Activated naive CD4-positive, alpha-beta T cell treated with anti-CD3 and anti-CD28 coated beads for 36 hours (primary cell): ENCODE measurements at regions of chr2 and their contacts with region 1.

Region 1: DNA sequence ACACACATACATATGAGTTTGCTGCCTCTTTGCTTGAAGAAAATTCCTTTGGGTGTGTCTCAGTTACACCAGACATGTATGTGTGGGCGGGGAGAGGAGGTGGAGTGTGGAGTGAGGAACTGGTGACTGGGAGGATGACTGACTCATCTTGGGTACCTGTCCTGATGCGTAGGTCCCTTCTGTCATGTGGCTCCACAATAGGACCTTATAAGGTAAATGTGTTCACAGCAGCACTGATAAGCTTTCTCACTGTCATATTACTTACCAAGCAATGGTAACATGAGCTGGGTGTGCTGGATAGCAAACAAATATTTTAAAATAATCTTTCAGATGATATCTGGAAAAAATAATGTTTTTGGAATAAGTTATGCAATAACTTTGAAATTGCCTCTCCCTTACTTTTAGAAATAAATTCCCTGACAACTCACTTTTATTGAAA is 45.1 kb downstream of the SLC9A2 start:
- DNase-seq: peak; percentile 82
- H3K4me3 Mint-ChIP-seq: no peak overlapping the region
- H3K27ac Mint-ChIP-seq: peak overlapping the region; percentile 10
- H3K4me1 Mint-ChIP-seq: peaks cover 38% of the 10 kb centered on the region
- H3K27me3 Mint-ChIP-seq: no peaks in the 10 kb centered on the region

Region 2: DNA sequence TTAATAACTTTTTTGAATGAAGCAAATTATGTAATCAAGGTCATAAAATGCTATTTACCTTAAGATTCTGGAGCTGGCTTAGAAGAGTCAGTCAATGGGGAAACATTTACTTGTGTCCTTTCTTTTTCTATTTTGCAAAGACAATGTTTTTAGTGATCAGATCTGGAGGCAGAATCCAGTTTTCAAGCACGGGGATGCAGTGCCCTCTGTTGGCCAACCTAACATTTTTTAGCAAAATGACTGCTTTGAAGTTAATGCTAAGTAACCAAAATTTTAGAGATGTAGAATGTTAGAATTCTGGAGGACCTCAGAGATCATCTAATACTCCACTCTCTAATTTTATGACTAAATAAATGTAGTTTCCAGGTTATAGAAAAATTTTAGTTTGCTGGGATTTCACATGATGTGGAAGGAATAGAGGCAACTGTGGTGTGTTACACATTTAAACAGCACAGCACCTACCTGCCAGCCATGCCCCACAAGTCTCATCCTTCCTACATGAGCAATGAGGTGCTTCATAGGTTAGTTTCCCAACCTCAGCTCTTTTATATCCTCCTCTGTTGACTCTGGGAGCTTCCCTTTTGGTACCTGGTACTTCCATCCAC is 215.0 kb before region 1 on chr2:
- CTCF ChIA-PET with region 1: no interaction called
- intact Hi-C with region 1: no loop called
- DNase-seq: peak; percentile 86
- H3K4me3 Mint-ChIP-seq: no peak overlapping the region
- H3K27ac Mint-ChIP-seq: no peak overlapping the region
- H3K4me1 Mint-ChIP-seq: peaks cover 2% of the 10 kb centered on the region
- H3K27me3 Mint-ChIP-seq: no peaks in the 10 kb centered on the region

Region 3: GRCh38 chr2:102677244-102678215 is 13.0 kb after region 1 on chr2:
- CTCF ChIA-PET with region 1: no interaction called
- intact Hi-C with region 1: no loop called
- DNase-seq: no peak
- H3K4me3 Mint-ChIP-seq: no peak overlapping the region
- H3K27ac Mint-ChIP-seq: no peak overlapping the region
- H3K4me1 Mint-ChIP-seq: no peaks in the 10 kb centered on the region
- H3K27me3 Mint-ChIP-seq: peaks cover 11% of the 10 kb centered on the region

Region 4: GRCh38 chr2:102736410-102737409 is 72.2 kb after region 1 on chr2:
- CTCF ChIA-PET with region 1: no interaction called
- intact Hi-C with region 1: loop called (anchors 2 kb)
- DNase-seq: peak; percentile 83
- H3K4me3 Mint-ChIP-seq: peak overlapping the region; percentile 94
- H3K27ac Mint-ChIP-seq: peak overlapping the region; percentile 83
- H3K4me1 Mint-ChIP-seq: peaks cover 38% of the 10 kb centered on the region
- H3K27me3 Mint-ChIP-seq: no peaks in the 10 kb centered on the region